ENCODE measurements at regions of chr12 and their contacts with region 1.

Region 1: GRCh38 chr12:6778574-6779550 is 6.5 kb downstream of the LAG3 start:
- DNase-seq: peak; percentile 81
- H3K4me3 Mint-ChIP-seq: peak overlapping the region; percentile 71
- H3K27ac Mint-ChIP-seq: peak overlapping the region; percentile 66
- H3K4me1 Mint-ChIP-seq: peaks cover 77% of the 10 kb centered on the region
- H3K27me3 Mint-ChIP-seq: no peaks in the 10 kb centered on the region

Region 2: GRCh38 chr12:6662906-6663742 is 115.7 kb before region 1 on chr12 and contains the start of gene ING4:
- intact Hi-C with region 1: no loop called
- DNase-seq: peak; percentile 96
- H3K4me3 Mint-ChIP-seq: peak within 1 kb of the TSS; percentile 89
- H3K27ac Mint-ChIP-seq: peak within 1 kb of the TSS; percentile 91
- H3K4me1 Mint-ChIP-seq: peaks cover 17% of the 10 kb centered on the region
- H3K27me3 Mint-ChIP-seq: no peaks in the 10 kb centered on the region
- total RNA-seq, gene ING4: 18.5 and 19.1 TPM in 2 replicates

Region 3: DNA sequence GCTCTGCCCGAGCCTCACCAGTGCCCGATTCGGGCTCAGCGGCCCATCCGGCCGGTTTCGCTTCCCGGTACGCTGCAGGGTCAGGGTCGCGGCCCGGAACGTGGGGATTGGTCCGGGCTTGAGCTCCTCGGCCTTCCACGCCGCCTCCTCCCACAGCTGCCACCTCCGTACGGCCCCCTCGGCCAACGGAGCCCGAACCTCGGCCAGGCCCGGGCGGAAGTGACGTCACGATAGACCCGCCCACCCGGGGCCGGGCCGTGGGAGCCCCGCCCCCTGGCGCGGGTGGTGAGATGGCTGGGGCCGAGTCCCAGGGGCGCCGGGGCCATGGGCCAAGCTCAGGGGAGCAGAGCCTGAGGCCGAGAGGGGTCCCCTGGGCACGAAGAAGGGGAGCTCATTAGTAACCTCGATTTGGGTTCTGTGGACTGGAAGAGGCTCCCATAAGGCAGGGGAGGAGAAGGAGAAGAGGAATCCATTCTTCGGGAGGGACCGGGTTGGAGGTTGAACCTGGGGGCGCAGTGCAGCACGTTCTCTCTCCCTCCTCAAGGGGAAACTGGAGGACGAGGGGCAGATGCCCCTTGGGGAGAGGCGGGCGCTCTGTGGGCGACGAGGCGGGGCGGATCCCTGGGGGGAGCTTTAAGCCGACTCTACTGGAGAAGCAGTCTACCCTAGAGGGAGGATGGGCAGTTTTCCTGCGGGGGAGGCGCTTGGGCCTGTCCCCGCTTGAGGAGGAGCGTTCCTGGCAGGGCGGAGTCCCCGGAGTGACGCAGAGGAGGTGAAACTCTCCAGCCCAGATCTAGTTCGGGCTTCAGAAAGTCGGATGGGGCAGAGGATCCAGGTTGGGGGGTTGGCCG is 25.7 kb before region 1 on chr12 and contains the start of gene MLF2:
- intact Hi-C with region 1: loop called (anchors 1 kb)
- DNase-seq: peak; percentile 97
- H3K4me3 Mint-ChIP-seq: peak within 1 kb of the TSS; percentile 94
- H3K27ac Mint-ChIP-seq: peak within 1 kb of the TSS; percentile 96
- H3K4me1 Mint-ChIP-seq: peaks cover 32% of the 10 kb centered on the region
- H3K27me3 Mint-ChIP-seq: no peaks in the 10 kb centered on the region
- total RNA-seq, gene MLF2: 162 and 172 TPM in 2 replicates

Region 4: GRCh38 chr12:6764011-6764828 is 14.6 kb before region 1 on chr12:
- intact Hi-C with region 1: loop called (anchors 2 kb)
- DNase-seq: peak; percentile 67
- H3K4me3 Mint-ChIP-seq: peak overlapping the region; percentile 67
- H3K27ac Mint-ChIP-seq: peak overlapping the region; percentile 30
- H3K4me1 Mint-ChIP-seq: peaks cover 34% of the 10 kb centered on the region
- H3K27me3 Mint-ChIP-seq: peaks cover 11% of the 10 kb centered on the region